ENCODE measurements at regions of chr2 and their contacts with region 1.

Region 1: DNA sequence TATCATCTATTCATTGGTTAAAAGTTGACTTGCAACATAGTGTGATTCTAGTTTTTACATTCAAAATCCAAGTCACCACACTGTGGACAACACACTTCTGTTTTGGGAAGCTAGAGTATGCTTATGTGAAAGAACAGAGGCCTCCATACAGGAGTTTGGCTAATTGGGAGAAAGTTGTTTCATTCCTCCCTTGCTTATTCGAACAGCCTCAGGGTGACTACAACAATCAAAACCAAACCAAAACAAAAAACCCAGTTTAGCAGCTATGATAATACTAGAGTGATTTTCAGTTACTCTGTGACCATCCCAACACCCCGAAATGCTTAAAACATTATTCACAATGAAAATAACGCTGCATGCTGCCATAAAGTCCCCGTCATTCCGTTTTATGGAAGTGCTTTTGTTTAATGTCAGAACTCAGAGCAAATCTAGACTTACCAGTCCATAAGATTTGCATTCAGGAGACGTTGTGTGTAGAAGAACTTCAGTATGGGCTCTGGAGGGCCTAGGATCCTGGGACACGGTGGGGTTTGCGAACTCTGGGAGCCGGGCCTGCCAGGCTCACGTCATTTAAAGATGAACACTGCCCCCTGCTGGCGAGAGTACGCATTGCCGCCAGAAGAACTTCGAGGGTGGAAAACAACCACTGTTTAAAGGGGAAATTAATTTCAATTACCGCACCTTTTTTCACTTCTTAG is 111.4 kb downstream of the FTCDNL1 start:
- DNase-seq: peak; percentile 71
- H3K4me3 Mint-ChIP-seq: no peak overlapping the region
- H3K27ac Mint-ChIP-seq: no peak overlapping the region
- H3K4me1 Mint-ChIP-seq: peaks cover 6% of the 10 kb centered on the region
- H3K27me3 Mint-ChIP-seq: peaks cover 14% of the 10 kb centered on the region

Region 2: GRCh38 chr2:198374375-198375082 is 1365.0 kb before region 1 on chr2:
- CTCF ChIA-PET with region 1: no interaction called
- intact Hi-C with region 1: loop called (anchors 10 kb)
- DNase-seq: peak; percentile 68
- H3K4me3 Mint-ChIP-seq: no peak overlapping the region
- H3K27ac Mint-ChIP-seq: no peak overlapping the region
- H3K4me1 Mint-ChIP-seq: peaks cover 6% of the 10 kb centered on the region
- H3K27me3 Mint-ChIP-seq: peaks cover 9% of the 10 kb centered on the region

Region 3: GRCh38 chr2:199488772-199489400 is 250.7 kb before region 1 on chr2:
- CTCF ChIA-PET with region 1: interaction called, 5 read pairs
- intact Hi-C with region 1: loop called (anchors 5 kb)
- DNase-seq: peak; percentile 68
- H3K4me3 Mint-ChIP-seq: no peak overlapping the region
- H3K27ac Mint-ChIP-seq: no peak overlapping the region
- H3K4me1 Mint-ChIP-seq: no peaks in the 10 kb centered on the region
- H3K27me3 Mint-ChIP-seq: peaks cover 18% of the 10 kb centered on the region

Region 4: DNA sequence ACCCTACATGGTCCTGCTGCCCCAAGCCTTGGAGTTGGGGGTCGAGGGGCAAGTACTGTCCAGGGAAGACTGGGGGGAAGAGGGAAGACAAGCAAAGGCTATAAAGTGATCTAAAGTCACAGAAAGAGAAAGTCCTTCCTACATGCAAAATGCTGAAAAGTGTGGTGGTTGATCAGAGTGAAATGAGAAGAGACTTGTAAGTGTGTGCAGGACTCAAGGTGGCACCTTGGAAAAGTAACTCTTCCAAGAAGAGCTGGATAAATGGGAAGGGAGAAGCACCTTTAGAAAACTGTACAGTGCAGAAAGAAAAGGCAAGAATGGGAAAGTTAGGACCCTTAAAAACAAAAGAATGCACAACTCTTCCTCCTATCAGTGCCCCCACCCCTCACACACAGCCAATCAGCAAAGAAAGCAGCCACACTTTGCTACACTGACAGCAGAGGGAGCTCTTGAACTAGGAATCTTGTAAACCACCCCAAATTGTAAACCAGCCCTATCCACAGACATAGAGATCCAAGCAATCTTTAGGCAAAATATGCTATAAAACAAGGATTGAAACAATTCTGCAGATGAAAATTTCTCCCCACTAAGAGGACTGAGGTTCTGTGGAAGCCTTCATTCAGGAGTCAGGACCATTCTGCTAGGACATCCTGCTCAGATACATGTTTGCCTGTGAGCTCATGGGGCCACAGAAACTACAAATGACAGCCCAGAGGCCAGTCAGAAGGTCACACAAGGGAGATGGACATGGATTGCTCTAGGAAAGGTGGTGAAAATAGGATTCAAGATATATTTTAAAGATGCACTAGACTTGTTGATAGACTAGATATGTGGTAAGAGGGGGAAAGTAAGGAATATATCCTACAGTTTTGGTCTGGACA is 35.0 kb before region 1 on chr2:
- CTCF ChIA-PET with region 1: interaction called, 34 read pairs
- intact Hi-C with region 1: loop called (anchors 1 kb)
- DNase-seq: peak; percentile 50
- H3K4me3 Mint-ChIP-seq: no peak overlapping the region
- H3K27ac Mint-ChIP-seq: no peak overlapping the region
- H3K4me1 Mint-ChIP-seq: no peaks in the 10 kb centered on the region
- H3K27me3 Mint-ChIP-seq: no peaks in the 10 kb centered on the region

Region 5: DNA sequence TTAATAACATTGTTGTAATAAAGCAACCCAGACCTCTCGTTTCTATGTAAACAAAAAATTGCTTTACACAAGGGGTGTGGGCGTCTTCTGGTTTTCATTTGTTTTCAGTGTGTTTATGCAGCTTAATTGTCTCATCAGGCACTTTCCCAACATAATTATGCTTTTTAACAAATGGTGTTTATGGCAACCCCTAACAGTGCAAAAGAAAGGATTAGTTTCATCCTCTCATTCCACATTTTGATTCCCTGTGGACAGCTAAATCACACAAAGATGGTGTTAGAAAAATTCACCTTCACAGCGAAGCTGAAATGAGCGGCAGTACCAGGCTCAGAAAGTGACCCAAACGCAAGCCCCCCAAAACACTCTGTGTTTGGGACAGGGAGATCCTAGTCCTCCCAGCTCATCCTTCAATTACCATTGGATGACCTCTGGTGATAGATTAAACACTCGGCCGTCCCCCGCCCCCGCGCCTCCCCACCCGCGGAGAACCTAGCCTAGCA is 110.7 kb after region 1 on chr2:
- CTCF ChIA-PET with region 1: no interaction called
- intact Hi-C with region 1: no loop called
- DNase-seq: no peak
- H3K4me3 Mint-ChIP-seq: peak overlapping the region; percentile 67
- H3K27ac Mint-ChIP-seq: no peak overlapping the region
- H3K4me1 Mint-ChIP-seq: peaks cover 13% of the 10 kb centered on the region
- H3K27me3 Mint-ChIP-seq: no peaks in the 10 kb centered on the region

Region 6: DNA sequence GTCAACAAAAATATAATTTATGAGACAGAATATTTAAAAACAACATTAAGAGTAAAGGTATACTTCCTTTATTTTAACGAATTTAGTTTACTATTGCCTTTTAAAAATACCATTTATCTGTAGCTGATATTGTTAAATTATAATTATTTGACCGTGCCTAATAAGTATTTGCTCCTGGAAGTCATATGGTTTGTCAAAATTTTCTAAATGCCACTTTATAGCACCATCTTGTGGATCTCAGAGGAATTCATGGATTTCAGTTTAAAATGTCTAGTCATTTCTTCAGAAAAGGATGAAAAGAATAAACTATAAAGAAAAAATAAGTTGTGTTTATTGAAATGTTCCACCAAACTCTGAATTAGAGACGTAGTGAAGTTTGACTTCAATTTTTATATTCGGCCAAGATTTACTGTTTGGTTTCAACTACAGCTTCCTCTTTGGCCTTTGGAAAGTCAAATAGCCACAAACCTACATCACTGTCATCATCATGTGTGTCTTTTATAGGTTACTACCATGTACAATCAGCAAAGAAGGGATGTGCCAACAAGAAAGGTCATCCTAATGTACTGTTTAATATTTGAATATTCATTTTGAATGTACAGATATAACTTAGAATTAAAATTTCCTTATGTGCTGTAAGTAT is 121.7 kb after region 1 on chr2:
- CTCF ChIA-PET with region 1: interaction called, 3 read pairs
- intact Hi-C with region 1: loop called (anchors 1 kb)
- DNase-seq: no peak
- H3K4me3 Mint-ChIP-seq: no peak overlapping the region
- H3K27ac Mint-ChIP-seq: no peak overlapping the region
- H3K4me1 Mint-ChIP-seq: no peaks in the 10 kb centered on the region
- H3K27me3 Mint-ChIP-seq: peaks cover 8% of the 10 kb centered on the region